ENCODE measurements at regions of chr10 and their contacts with region 1.

Region 1: DNA sequence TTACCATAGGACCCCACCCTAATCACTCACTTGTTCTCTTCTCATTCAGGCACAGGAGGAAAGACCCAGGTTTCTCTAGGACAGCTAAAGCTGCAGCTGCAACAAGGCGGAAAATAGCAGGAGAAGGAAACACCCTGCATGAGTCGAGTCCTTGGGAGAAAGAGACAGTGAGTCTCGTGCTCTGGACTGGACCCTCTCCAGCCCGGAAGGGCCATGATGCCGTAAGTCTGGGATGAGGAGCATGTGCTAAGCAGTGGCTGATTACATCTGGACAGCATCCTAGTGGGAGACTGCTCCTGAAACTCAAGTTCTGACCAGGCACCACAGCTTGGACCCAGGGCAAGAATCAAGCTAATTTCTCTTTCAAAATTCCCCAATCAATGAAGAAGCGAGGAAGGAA is 39.4 kb downstream of the FBXW4 start:
- DNase-seq: peak; percentile 87

Region 2: DNA sequence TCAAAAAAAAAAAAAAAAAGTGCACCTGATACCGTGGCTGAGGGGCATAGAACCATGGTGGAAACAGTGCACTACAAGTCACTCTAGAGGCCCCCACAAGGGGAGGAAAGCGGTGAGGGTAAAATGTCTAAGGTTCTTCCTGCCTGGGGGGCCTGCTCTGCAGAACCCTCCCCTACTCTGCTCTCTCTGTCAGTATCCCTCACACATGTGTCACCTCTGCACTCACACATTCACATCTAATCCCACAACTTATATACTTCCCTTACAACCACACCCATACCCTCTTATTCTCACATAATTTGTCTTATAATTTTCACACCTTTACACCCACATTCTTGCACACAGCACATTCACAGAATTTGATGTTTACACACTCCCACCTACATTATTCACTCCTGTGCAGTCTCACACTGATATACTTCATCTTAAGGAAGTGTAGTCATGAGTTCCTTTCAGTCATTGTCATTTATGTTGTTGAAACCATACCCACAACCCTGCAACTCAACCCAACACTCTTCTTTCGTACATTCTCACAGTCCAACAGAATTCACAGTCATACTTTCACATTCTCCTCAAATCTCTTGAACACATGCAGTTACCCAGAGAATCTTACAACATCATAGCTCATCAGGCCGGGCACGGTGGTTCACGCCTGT is 978.2 kb before region 1 on chr10:
- intact Hi-C with region 1: no loop called
- DNase-seq: no peak

Region 3: GRCh38 chr10:100766693-100767421 is 888.7 kb before region 1 on chr10:
- intact Hi-C with region 1: loop called in 1 of 2 experiments (anchors 5 kb)
- DNase-seq: peak; percentile 37

Region 4: GRCh38 chr10:101569838-101570766 is 85.5 kb before region 1 on chr10:
- intact Hi-C with region 1: no loop called
- DNase-seq: peak; percentile 93

Region 5: GRCh38 chr10:101725296-101726115 is 69.9 kb after region 1 on chr10:
- intact Hi-C with region 1: no loop called
- DNase-seq: no peak